ENCODE measurements at regions of chr13 and their contacts with region 1.

Region 1: DNA sequence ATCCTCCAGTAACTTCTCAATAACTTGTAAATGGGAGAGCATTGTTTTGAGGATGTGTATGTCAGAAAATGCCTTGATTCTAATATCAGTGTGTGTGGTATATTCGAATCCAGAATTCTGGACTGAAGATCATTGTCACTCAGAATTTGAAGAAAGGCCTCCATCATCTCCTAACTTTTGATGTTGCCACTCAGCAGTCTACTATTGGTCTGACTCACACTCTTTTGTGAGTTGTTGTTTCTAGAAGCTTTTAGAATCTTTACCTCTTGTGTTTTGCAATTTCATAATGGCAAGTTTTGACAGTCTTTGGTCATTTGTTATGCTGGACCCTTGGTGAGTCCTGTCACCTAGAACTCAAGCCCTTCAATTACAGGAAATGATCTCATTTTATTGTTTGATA is 77.0 kb downstream of the RUBCNL start:
- DNase-seq: no peak
- H3K4me3 ChIP-seq: no peak overlapping the region
- H3K27ac ChIP-seq: no peak overlapping the region
- H3K4me1 ChIP-seq: no peaks in the 10 kb centered on the region
- H3K27me3 ChIP-seq: no peaks in the 10 kb centered on the region
- CTCF ChIP-seq: no peak
- POLR2A ChIP-seq: no peak

Region 2: DNA sequence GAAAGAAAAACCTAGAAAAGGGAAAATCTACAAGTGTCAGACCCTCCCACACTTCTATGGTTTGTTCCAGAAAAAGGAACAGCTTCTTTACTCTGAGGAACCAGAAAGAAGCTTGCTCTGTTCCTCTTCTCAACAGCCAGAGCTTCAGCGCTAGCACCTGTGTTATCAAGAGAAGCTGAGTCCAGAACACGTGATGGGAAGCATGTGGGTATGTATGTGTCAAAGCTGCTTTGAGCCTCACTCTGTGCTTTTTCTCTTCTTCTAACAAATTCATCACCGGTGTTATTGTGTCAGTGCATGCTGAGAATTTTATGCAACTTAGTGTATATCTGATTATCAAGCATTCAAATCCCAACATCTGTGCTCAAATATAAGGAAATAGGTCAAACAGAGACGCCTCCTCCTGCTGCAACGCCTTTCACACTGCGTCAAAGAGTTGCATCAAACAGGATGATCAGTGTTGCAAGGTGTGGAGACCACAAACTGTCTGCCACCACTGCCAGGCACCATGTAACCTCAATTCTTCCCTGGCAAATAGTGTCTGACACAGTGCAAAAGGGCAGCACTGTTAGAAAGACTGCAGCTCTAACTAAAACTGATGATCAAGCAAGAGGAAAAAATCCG is 14.5 kb before region 1 on chr13:
- CTCF ChIA-PET with region 1: no interaction called
- POLR2A ChIA-PET with region 1: no interaction called
- dilution Hi-C with region 1: no loop called
- intact Hi-C with region 1: loop called (anchors 2 kb)
- DNase-seq: peak; percentile 48
- H3K4me3 ChIP-seq: no peak overlapping the region
- H3K27ac ChIP-seq: no peak overlapping the region
- H3K4me1 ChIP-seq: peaks cover 29% of the 10 kb centered on the region
- H3K27me3 ChIP-seq: no peaks in the 10 kb centered on the region
- CTCF ChIP-seq: no peak
- POLR2A ChIP-seq: no peak